ENCODE measurements at regions of chr6 and their contacts with region 1.

Region 1: DNA sequence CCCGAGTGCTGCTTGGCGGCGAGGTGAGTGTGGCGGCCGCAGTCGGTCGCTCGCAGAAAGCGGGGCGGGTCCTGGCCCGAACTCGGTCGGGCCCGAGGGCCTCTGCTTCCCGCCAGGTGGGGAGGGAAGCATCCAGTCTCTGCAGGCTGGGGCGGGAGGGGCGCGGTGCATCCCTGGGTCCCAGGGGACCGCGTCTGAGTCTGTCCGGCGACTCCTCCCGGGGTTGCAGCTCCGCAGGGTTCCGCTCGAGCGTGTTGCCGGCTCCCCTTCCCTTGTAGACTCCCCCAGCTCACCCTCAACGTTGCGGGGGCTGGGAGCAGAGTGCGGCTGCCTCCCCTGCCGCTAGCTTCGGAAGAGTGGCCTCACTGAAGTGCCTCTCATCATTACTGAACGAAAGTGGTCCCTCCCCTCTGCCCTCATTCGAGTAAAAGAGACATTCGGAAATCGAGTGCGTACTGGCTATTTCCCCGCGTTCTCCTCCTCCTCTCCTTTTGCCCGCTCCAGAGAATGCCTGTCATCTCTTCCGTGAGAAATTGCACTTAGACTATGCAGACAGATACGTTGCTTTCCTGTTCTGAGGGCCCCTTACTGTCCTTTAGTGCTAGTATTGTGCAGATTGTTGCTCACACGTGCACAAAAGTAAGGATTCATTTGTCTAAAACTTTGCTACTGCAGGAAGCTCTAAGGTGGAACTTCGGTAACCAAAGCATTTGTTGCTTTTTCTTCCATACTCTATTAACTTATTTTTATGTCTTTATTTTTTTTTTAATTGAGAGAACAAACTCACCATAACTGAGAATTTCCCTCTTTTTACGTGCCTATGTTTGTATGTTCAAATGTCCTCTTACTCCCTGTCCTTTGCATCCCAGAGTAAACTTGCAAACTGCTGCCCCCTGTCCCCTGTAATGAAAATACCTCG is 751 bp downstream of the MAP3K4 start:
- DNase-seq: no peak
- H3K4me3 ChIP-seq: peak overlapping the region; percentile 75 to 97 (median 94)
- H3K27ac ChIP-seq: peak overlapping the region; percentile 89 to 98 (median 97)
- H3K4me1 ChIP-seq: peaks cover 12 to 59% (median 24%) of the 10 kb centered on the region in 3 donors
- H3K27me3 ChIP-seq: no peaks in the 10 kb centered on the region
- CTCF ChIP-seq: peak in 4 of 6 experiments; percentile 25 to 58 (median 52)
- POLR2A ChIP-seq: no peak

Region 2: DNA sequence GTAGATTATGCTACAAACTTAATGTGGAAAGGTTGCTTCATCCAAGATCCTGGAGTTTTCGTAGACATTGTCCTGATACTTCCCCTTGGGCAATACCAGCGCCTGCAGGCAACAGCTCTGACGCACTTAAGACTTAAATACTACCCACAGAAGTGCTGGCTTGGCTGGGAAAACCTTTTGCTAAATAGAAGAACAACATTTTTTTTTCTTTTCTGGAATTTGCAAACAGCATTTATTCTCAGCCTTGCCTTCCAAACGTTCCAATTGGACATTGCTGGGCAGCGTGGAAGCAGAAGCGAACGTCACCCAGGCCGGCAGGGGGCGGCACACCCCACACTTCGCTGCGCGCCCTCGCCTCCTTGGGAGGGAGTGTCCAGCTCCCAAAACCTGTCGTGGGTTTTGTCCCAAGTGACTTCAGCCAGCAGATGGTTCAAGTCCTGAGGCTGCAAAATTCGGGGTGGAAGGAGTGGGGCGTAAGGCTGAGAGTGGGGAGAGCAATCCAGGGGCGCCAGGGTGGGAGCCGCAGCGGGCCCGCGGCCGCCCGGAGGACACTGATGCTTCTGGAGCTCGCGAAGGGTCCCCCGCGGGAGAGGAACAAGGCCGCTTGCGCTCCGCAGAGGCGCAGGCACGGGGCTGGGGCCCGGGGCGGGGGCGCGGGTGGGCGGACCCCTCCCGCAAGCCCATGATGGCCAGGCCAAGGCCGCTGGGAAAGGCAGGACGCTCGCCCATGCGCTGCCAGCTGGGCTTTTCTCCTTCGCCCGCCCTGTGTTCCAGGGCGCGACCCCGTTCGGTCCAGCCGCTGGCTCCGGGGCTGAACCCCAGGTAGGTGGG is 61.6 kb before region 1 on chr6:
- intact Hi-C with region 1: loop called (anchors 5 kb)
- DNase-seq: no peak
- H3K4me3 ChIP-seq: peak overlapping the region; percentile 41 to 69 (median 54)
- H3K27ac ChIP-seq: peak overlapping the region in 2 of 4 donors; percentile 11 to 70
- H3K4me1 ChIP-seq: peaks cover 8 to 18% (median 10%) of the 10 kb centered on the region in 3 donors
- H3K27me3 ChIP-seq: peaks cover 0 to 17% (median 0%) of the 10 kb centered on the region in 4 donors
- CTCF ChIP-seq: peak; percentile 68 to 92 (median 89)
- POLR2A ChIP-seq: no peak

Measured in esophagus squamous epithelium (tissue), 5 donors.